Activated B cell treated with CpG ODN at 0.5 μM for 24 hours (primary cell): ENCODE measurements at regions of chrX and their contacts with region 1.

Region 1: GRCh38 chrX:129982274-129983251 is at the start of gene BCORL1:
- DNase-seq: peak; percentile 70
- ATAC-seq: peak; percentile 89
- H3K4me3 Mint-ChIP-seq: no peak within 1 kb of the TSS
- H3K27ac Mint-ChIP-seq: peak within 1 kb of the TSS; percentile 68
- H3K4me1 Mint-ChIP-seq: peaks cover 18% of the 10 kb centered on the region
- H3K27me3 Mint-ChIP-seq: no peaks in the 10 kb centered on the region
- CTCF ChIP-seq: no peak
- total RNA-seq, gene BCORL1: 8.0 and 8.2 TPM in 2 replicates

Region 2: DNA sequence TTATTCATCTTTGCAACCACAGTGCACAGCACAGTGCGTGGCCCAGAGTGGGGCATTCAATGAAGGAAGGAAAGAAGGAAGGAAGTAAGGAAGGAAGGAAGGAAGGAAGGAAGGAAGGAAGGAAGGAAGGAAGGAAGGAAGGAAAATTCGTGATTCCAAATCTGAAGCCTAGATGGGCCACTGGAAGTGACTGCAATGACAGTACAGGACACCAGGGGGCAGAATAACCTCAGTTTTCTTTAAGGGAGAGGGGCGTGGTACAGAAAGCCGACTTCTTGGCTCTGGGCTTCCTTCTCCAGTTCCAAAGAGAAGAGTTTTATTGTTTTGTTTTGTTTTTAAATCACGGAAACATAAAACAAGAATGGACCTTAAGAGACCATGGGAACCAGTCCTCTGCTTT is 375.6 kb before region 1 on chrX:
- CTCF ChIA-PET with region 1: no interaction called
- POLR2A ChIA-PET with region 1: no interaction called
- intact Hi-C with region 1: loop called (anchors 2 kb)
- DNase-seq: no peak
- ATAC-seq: peak; percentile 61
- H3K4me3 Mint-ChIP-seq: no peak overlapping the region
- H3K27ac Mint-ChIP-seq: no peak overlapping the region
- H3K4me1 Mint-ChIP-seq: peaks cover 19% of the 10 kb centered on the region
- H3K27me3 Mint-ChIP-seq: no peaks in the 10 kb centered on the region
- CTCF ChIP-seq: no peak

Region 3: DNA sequence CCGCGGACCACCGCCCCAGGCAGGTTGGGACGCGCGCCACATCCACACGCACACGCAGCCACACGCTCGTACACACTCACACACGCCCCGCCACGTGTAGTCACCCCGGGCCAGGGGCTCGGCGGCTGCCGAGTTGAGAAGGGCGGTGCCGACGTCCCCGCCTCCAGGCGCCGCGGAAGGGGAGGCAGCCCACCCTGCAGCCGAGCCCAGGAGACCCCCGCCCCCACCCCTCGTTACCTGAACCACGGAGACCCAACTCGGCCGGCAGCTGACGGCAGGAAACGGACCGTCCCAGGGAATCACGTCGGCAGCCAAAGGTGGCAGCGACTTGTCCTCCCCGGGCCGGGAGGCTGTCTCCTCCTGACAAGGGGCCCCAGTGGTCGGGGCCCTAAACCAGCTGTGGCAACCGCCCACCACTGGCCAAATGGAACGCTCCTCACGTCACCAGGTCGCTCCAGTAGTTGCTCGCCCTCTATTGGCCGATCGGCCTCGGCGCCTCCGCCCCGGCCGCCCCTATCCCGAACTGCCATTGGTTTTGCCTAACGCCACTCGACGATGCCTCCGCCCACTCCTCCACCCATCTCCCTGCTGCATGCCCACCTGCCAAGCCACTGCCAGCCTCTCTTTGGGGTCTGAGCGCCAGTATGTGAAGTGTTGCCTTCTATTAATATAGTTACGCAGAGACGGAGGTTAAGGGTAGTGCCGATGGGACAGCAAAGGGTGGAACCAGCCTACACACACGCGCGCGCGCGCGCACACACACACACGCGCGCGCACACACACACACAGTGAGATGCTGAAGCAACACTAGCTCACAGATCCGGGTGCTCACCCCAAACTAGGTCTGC is 138.9 kb before region 1 on chrX and contains the start of gene ZDHHC9:
- CTCF ChIA-PET with region 1: no interaction called
- POLR2A ChIA-PET with region 1: no interaction called
- intact Hi-C with region 1: loop called (anchors 2 kb)
- DNase-seq: peak; percentile 74
- ATAC-seq: peak; percentile 99
- H3K4me3 Mint-ChIP-seq: peak within 1 kb of the TSS; percentile 94
- H3K27ac Mint-ChIP-seq: peak within 1 kb of the TSS; percentile 77
- H3K4me1 Mint-ChIP-seq: peaks cover 14% of the 10 kb centered on the region
- H3K27me3 Mint-ChIP-seq: no peaks in the 10 kb centered on the region
- CTCF ChIP-seq: no peak
- total RNA-seq, gene ZDHHC9: 3.9 and 4.2 TPM in 2 replicates

Region 4: GRCh38 chrX:129931411-129932015 is 51.0 kb before region 1 on chrX:
- CTCF ChIA-PET with region 1: no interaction called
- POLR2A ChIA-PET with region 1: interaction called, 9 read pairs
- intact Hi-C with region 1: loop called (anchors 1 kb)
- DNase-seq: peak; percentile 59
- ATAC-seq: peak; percentile 70
- H3K4me3 Mint-ChIP-seq: peak overlapping the region; percentile 86
- H3K27ac Mint-ChIP-seq: peak overlapping the region; percentile 90
- H3K4me1 Mint-ChIP-seq: peaks cover 5% of the 10 kb centered on the region
- H3K27me3 Mint-ChIP-seq: no peaks in the 10 kb centered on the region
- CTCF ChIP-seq: no peak

Region 5: GRCh38 chrX:129957241-129958082 is 25.1 kb before region 1 on chrX:
- CTCF ChIA-PET with region 1: no interaction called
- POLR2A ChIA-PET with region 1: interaction called, 12 read pairs
- intact Hi-C with region 1: loop called (anchors 1 kb)
- DNase-seq: peak; percentile 64
- ATAC-seq: peak; percentile 73
- H3K4me3 Mint-ChIP-seq: peak overlapping the region; percentile 77
- H3K27ac Mint-ChIP-seq: peak overlapping the region; percentile 59
- H3K4me1 Mint-ChIP-seq: peaks cover 37% of the 10 kb centered on the region
- H3K27me3 Mint-ChIP-seq: peaks cover 2% of the 10 kb centered on the region
- CTCF ChIP-seq: no peak

Region 6: DNA sequence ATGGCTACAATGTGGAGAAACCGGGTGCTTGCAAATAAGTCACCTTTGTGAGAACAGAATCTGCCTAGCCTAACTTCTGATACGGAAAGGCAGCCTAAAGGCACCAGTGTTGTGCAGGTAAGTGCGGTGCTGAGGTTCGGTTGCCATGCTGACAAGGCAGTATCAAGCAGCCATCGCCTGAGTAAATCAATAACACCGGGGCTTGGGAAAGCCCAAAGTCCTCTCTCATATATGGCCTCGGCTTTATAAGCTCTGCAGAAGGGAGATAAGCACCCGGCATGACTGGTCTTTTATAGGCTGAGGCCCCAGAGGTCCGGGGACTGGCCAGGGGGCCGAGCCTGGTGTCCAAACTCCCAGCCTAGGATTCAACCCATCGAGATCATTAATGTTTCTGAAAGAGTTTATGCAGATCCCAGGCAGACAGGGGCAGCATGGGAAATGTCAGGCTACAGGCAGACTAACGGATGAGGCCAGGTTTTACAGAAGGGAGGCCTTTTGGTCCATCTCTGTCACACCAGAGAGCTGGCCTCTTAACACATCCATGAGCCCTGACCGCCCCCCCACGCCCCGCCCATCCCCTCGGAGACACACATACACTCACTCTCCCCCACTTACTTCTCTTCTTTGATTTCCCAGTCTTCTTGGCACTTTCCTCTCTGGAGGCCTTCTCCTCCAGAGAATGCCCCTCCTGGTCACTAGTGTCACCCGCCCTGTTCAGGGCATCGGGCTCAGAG is 89.2 kb after region 1 on chrX:
- CTCF ChIA-PET with region 1: no interaction called
- POLR2A ChIA-PET with region 1: no interaction called
- intact Hi-C with region 1: no loop called
- DNase-seq: no peak
- ATAC-seq: no peak
- H3K4me3 Mint-ChIP-seq: no peak overlapping the region
- H3K27ac Mint-ChIP-seq: no peak overlapping the region
- H3K4me1 Mint-ChIP-seq: no peaks in the 10 kb centered on the region
- H3K27me3 Mint-ChIP-seq: no peaks in the 10 kb centered on the region
- CTCF ChIP-seq: no peak